ENCODE measurements at regions of chr15 and their contacts with region 1.

Region 1: GRCh38 chr15:90886041-90886614 is 1.8 kb downstream of the FES start:
- DNase-seq: peak in 8 of 10 donors; percentile 63 to 83 (median 76)
- H3K4me3 ChIP-seq: peak overlapping the region in 27 of 59 donors; percentile 10 to 69 (median 56)
- H3K27ac ChIP-seq: peak overlapping the region in 52 of 59 donors; percentile 33 to 94 (median 86)
- H3K27me3 ChIP-seq: no peaks in the 10 kb centered on the region
- CTCF ChIP-seq: peak; percentile 83 to 99 (median 97)

Region 2: GRCh38 chr15:90529371-90530249 is 356.5 kb before region 1 on chr15 and contains the start of gene CRTC3:
- intact Hi-C with region 1: loop called in 1 of 2 experiments (anchors 10 kb)
- DNase-seq: peak in 9 of 10 donors; percentile 33 to 77 (median 46)
- H3K4me3 ChIP-seq: peak within 1 kb of the TSS; percentile 53 to 94 (median 86)
- H3K27ac ChIP-seq: peak within 1 kb of the TSS; percentile 64 to 97 (median 93)
- H3K27me3 ChIP-seq: no peaks in the 10 kb centered on the region
- CTCF ChIP-seq: peak in 3 of 56 donors; percentile 1 to 5 (median 5)
- total RNA-seq, gene CRTC3: 33.6 to 101 (median 56.1) TPM

Region 3: DNA sequence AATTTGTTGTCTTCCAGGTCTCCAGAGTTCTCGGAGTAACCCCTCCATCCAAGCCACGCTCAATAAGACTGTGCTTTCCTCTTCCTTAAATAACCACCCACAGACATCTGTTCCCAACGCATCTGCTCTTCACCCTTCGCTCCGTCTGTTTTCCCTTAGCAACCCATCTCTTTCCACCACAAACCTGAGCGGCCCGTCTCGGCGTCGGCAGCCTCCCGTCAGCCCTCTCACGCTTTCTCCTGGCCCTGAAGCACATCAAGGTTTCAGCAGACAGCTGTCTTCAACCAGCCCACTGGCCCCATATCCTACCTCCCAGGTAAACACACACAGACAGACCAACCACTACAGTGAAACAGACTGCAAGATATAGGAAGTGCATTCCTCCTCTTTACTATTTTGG is 256.9 kb before region 1 on chr15:
- intact Hi-C with region 1: no loop called
- DNase-seq: peak in 1 of 10 donors; percentile 45
- H3K4me3 ChIP-seq: no peak overlapping the region
- H3K27ac ChIP-seq: peak overlapping the region in 23 of 59 donors; percentile 2 to 63 (median 31)
- H3K27me3 ChIP-seq: no peaks in the 10 kb centered on the region
- CTCF ChIP-seq: no peak

Region 4: GRCh38 chr15:90648137-90649070 is 237.7 kb before region 1 on chr15:
- intact Hi-C with region 1: loop called (anchors 1 to 2 kb)
- DNase-seq: peak in 4 of 10 donors; percentile 41 to 74 (median 62)
- H3K4me3 ChIP-seq: no peak overlapping the region
- H3K27ac ChIP-seq: peak overlapping the region in 16 of 59 donors; percentile 16 to 66 (median 48)
- H3K27me3 ChIP-seq: no peaks in the 10 kb centered on the region
- CTCF ChIP-seq: peak; percentile 79 to 97 (median 91)

Region 5: GRCh38 chr15:90716976-90717821 is 168.9 kb before region 1 on chr15 and contains the start of gene BLM:
- intact Hi-C with region 1: loop called (anchors 5 kb)
- DNase-seq: peak; percentile 90 to 97 (median 97)
- H3K4me3 ChIP-seq: peak within 1 kb of the TSS; percentile 50 to 95 (median 81)
- H3K27ac ChIP-seq: peak within 1 kb of the TSS; percentile 40 to 96 (median 91)
- H3K27me3 ChIP-seq: no peaks in the 10 kb centered on the region
- CTCF ChIP-seq: peak in 51 of 56 donors; percentile 19 to 69 (median 53)
- total RNA-seq, gene BLM: 1.9 to 12.9 (median 5.7) TPM